ENCODE measurements at regions of chr16 and their contacts with region 1.

Region 1: GRCh38 chr16:12215277-12216105 is 239.0 kb downstream of the SNX29 start:
- DNase-seq: no peak
- ATAC-seq: no peak
- H3K4me3 ChIP-seq: no peak overlapping the region
- H3K27ac ChIP-seq: no peak overlapping the region
- H3K4me1 ChIP-seq: no peaks in the 10 kb centered on the region
- H3K27me3 ChIP-seq: no peaks in the 10 kb centered on the region
- CTCF ChIP-seq: no peak

Region 2: GRCh38 chr16:12184419-12184917 is 31.0 kb before region 1 on chr16:
- CTCF ChIA-PET with region 1: no interaction called
- POLR2A ChIA-PET with region 1: no interaction called
- in situ Hi-C with region 1: no loop called
- intact Hi-C with region 1: loop called (anchors 1 kb)
- DNase-seq: no peak
- ATAC-seq: no peak
- H3K4me3 ChIP-seq: no peak overlapping the region
- H3K27ac ChIP-seq: no peak overlapping the region
- H3K4me1 ChIP-seq: no peaks in the 10 kb centered on the region
- H3K27me3 ChIP-seq: no peaks in the 10 kb centered on the region
- CTCF ChIP-seq: 0 out of 2 replicates have a peak, but pooled peaks have one; percentile 10